ENCODE measurements at regions of chr3 and their contacts with region 1.

Region 1: GRCh38 chr3:15051531-15051930 is 13.6 kb downstream of the MRPS25 start:
- DNase-seq: peak; percentile 69 to 79 (median 72)
- ATAC-seq: peak; percentile 90
- H3K4me3 ChIP-seq: no peak overlapping the region
- H3K27ac ChIP-seq: peak overlapping the region; percentile 7; the same call in 1 of the 3 replicates
- H3K4me1 ChIP-seq: peaks cover 33 to 43% of the 10 kb centered on the region in 2 experiments
- H3K27me3 ChIP-seq: no peaks in the 10 kb centered on the region
- CTCF ChIP-seq: peak; percentile 76 to 90 (median 77)
- EP300 ChIP-seq: no peak
- POLR2A ChIP-seq: peak; percentile 18; the same call in 1 of the 2 replicates
- RAD21 ChIP-seq: peak; percentile 6 to 51; a peak in 2 of 4 replicates

Region 2: GRCh38 chr3:14691239-14691638 is 360.3 kb before region 1 on chr3:
- CTCF ChIA-PET with region 1: no interaction called
- POLR2A ChIA-PET with region 1: no interaction called
- in situ Hi-C with region 1: no loop called
- intact Hi-C with region 1: no loop called
- DNase-seq: peak in 1 of 4 experiments; percentile 5
- ATAC-seq: no peak
- H3K4me3 ChIP-seq: no peak overlapping the region
- H3K27ac ChIP-seq: no peak overlapping the region; the same call in 2 of the 3 replicates
- H3K4me1 ChIP-seq: no peaks in the 10 kb centered on the region
- H3K27me3 ChIP-seq: peaks cover 31 to 34% of the 10 kb centered on the region in 2 experiments
- CTCF ChIP-seq: no peak
- EP300 ChIP-seq: no peak
- POLR2A ChIP-seq: no peak
- RAD21 ChIP-seq: no peak

Region 3: GRCh38 chr3:14947886-14948555 is 103.5 kb before region 1 on chr3:
- CTCF ChIA-PET with region 1: no interaction called
- POLR2A ChIA-PET with region 1: interaction called, 4 read pairs
- in situ Hi-C with region 1: no loop called
- intact Hi-C with region 1: loop called (anchors 2 kb)
- DNase-seq: peak; percentile 99 to 100 (median 99)
- ATAC-seq: peak; percentile 94
- H3K4me3 ChIP-seq: peak overlapping the region; percentile 85
- H3K27ac ChIP-seq: peak overlapping the region; percentile 99
- H3K4me1 ChIP-seq: peaks cover 5 to 31% of the 10 kb centered on the region in 2 experiments
- H3K27me3 ChIP-seq: no peaks in the 10 kb centered on the region
- CTCF ChIP-seq: no peak
- EP300 ChIP-seq: peak; percentile 54
- POLR2A ChIP-seq: peak; percentile 66; the same call in 1 of the 2 replicates
- RAD21 ChIP-seq: no peak

Region 4: GRCh38 chr3:15064835-15065549 is 13.5 kb after region 1 on chr3 and contains the start of gene MRPS25:
- CTCF ChIA-PET with region 1: no interaction called
- POLR2A ChIA-PET with region 1: interaction called, 35 read pairs
- in situ Hi-C with region 1: no loop called
- intact Hi-C with region 1: loop called (anchors 1 kb)
- DNase-seq: peak; percentile 95 to 97 (median 96)
- ATAC-seq: peak; percentile 98
- H3K4me3 ChIP-seq: peak within 1 kb of the TSS; percentile 93
- H3K27ac ChIP-seq: peak within 1 kb of the TSS; percentile 99
- H3K4me1 ChIP-seq: peaks cover 18 to 27% of the 10 kb centered on the region in 2 experiments; a peak in 4 of 5 replicates
- H3K27me3 ChIP-seq: no peaks in the 10 kb centered on the region
- CTCF ChIP-seq: 0 out of 6 replicates have a peak, but pooled peaks of 2 of the 3 experiments have one; percentile 1 to 12
- EP300 ChIP-seq: peak; percentile 33; the same call in 1 of the 2 replicates
- POLR2A ChIP-seq: peak; percentile 99
- RAD21 ChIP-seq: 0 out of 4 replicates have a peak, but pooled peaks of 1 of the 2 experiments have one; percentile 5
- polyA plus RNA-seq, gene MRPS25: 34.3 to 65.1 TPM